GM12878 (cell line): ENCODE measurements at regions of chr5 and their contacts with region 1.

Region 1: GRCh38 chr5:115262321-115263077 is at the start of gene PGGT1B:
- DNase-seq: peak; percentile 23
- ATAC-seq: peak; percentile 95
- H3K4me3 ChIP-seq: peak within 1 kb of the TSS; percentile 84
- H3K27ac ChIP-seq: peak within 1 kb of the TSS; percentile 92
- H3K4me1 ChIP-seq: no peaks in the 10 kb centered on the region; the same call in 1 of the 2 replicates
- H3K27me3 ChIP-seq: no peaks in the 10 kb centered on the region
- CTCF ChIP-seq: no peak
- EP300 ChIP-seq: no peak
- POLR2A ChIP-seq: peak; percentile 90
- RAD21 ChIP-seq: no peak
- polyA plus RNA-seq, gene PGGT1B: 13.1 to 13.9 TPM

Region 2: GRCh38 chr5:115274584-115274983 is 12.1 kb after region 1 on chr5:
- CTCF ChIA-PET with region 1: interaction called, 4 read pairs
- POLR2A ChIA-PET with region 1: interaction called, 3 read pairs
- RAD21 ChIA-PET with region 1: no interaction called
- SMC1A ChIA-PET with region 1: interaction called, 11 read pairs
- in situ Hi-C with region 1: no loop called
- intact Hi-C with region 1: no loop called
- DNase-seq: no peak
- ATAC-seq: no peak
- H3K4me3 ChIP-seq: no peak overlapping the region
- H3K27ac ChIP-seq: no peak overlapping the region
- H3K4me1 ChIP-seq: no peaks in the 10 kb centered on the region
- H3K27me3 ChIP-seq: no peaks in the 10 kb centered on the region
- CTCF ChIP-seq: no peak
- EP300 ChIP-seq: no peak
- POLR2A ChIP-seq: no peak
- RAD21 ChIP-seq: no peak

Region 3: DNA sequence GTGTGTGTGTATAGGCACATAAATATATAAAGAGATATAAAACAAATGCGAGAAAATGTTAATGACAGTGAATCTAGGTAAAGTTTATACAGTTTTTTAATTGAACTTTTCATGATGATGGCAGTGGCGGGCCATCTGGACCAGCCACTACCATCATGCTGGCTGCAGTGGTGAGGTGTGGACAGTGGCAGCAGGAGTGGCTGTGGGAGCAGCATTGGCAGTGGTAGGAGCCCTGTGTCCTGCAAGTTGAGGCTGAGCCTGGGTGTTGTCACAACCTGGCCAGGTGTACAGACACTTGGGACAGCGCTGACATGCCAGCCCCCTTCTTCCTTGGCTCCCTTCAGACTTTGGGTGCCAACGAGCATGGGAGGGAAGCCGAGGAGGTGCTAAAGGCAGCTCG is 105.8 kb after region 1 on chr5:
- CTCF ChIA-PET with region 1: no interaction called
- POLR2A ChIA-PET with region 1: no interaction called
- RAD21 ChIA-PET with region 1: no interaction called
- SMC1A ChIA-PET with region 1: no interaction called
- in situ Hi-C with region 1: no loop called
- intact Hi-C with region 1: no loop called
- DNase-seq: no peak
- ATAC-seq: no peak
- H3K4me3 ChIP-seq: no peak overlapping the region
- H3K27ac ChIP-seq: no peak overlapping the region
- H3K4me1 ChIP-seq: no peaks in the 10 kb centered on the region
- H3K27me3 ChIP-seq: no peaks in the 10 kb centered on the region; a peak in 1 of 4 replicates
- CTCF ChIP-seq: no peak
- EP300 ChIP-seq: no peak
- POLR2A ChIP-seq: no peak
- RAD21 ChIP-seq: no peak